Aorta (tissue), 5 donors: ENCODE measurements at regions of chr1 and their contacts with region 1.

Region 1: GRCh38 chr1:27102707-27103491 is 52.0 kb downstream of the SLC9A1 start:
- DNase-seq: peak; percentile 79 to 95
- ATAC-seq: peak; percentile 79
- H3K4me3 ChIP-seq: no peak overlapping the region
- H3K27ac ChIP-seq: no peak overlapping the region
- H3K4me1 ChIP-seq: no peaks in the 10 kb centered on the region
- H3K27me3 ChIP-seq: no peaks in the 10 kb centered on the region

Region 2: DNA sequence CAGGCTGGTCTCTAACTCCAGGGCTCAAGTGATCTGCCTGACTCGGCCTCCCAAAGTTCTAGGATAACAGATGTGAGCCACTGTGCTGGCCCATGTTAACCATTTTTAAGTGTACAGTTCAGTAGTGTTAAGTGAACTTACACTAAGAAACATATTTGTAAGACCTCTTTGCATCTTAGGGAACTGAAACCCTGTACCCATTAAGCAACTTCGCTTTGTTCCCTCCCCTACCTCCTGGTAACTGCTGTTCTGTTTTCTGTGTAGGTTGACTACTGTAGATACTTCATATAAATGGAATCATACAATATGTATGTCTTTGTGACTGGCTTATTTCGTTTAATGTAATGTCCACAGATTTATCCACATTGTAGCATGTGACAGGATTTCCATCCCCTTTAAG is 170.4 kb before region 1 on chr1:
- intact Hi-C with region 1: no loop called
- DNase-seq: no peak
- ATAC-seq: no peak
- H3K4me3 ChIP-seq: no peak overlapping the region
- H3K27ac ChIP-seq: no peak overlapping the region
- H3K4me1 ChIP-seq: no peaks in the 10 kb centered on the region
- H3K27me3 ChIP-seq: no peaks in the 10 kb centered on the region

Region 3: GRCh38 chr1:27203946-27204345 is 101.0 kb after region 1 on chr1:
- intact Hi-C with region 1: loop called (anchors 2 kb)
- DNase-seq: no peak
- ATAC-seq: no peak
- H3K4me3 ChIP-seq: no peak overlapping the region
- H3K27ac ChIP-seq: no peak overlapping the region
- H3K4me1 ChIP-seq: no peaks in the 10 kb centered on the region
- H3K27me3 ChIP-seq: no peaks in the 10 kb centered on the region

Region 4: GRCh38 chr1:27284425-27285273 is 181.8 kb after region 1 on chr1:
- intact Hi-C with region 1: loop called (anchors 1 kb)
- DNase-seq: peak; percentile 88 to 93
- ATAC-seq: peak; percentile 90
- H3K4me3 ChIP-seq: no peak overlapping the region
- H3K27ac ChIP-seq: no peak overlapping the region
- H3K4me1 ChIP-seq: no peaks in the 10 kb centered on the region
- H3K27me3 ChIP-seq: no peaks in the 10 kb centered on the region

Region 5: GRCh38 chr1:27300341-27301051 is 197.6 kb after region 1 on chr1:
- intact Hi-C with region 1: loop called in 1 of 2 experiments (anchors 5 kb)
- DNase-seq: peak; percentile 88 to 91
- ATAC-seq: peak; percentile 93
- H3K4me3 ChIP-seq: no peak overlapping the region
- H3K27ac ChIP-seq: no peak overlapping the region
- H3K4me1 ChIP-seq: no peaks in the 10 kb centered on the region
- H3K27me3 ChIP-seq: no peaks in the 10 kb centered on the region

Region 6: GRCh38 chr1:27392096-27392777 is 289.3 kb after region 1 on chr1 and contains the start of gene GPR3:
- intact Hi-C with region 1: loop called in 1 of 2 experiments (anchors 10 kb)
- DNase-seq: peak; percentile 92 to 97
- ATAC-seq: peak; percentile 93
- H3K4me3 ChIP-seq: no peak within 1 kb of the TSS
- H3K27ac ChIP-seq: no peak within 1 kb of the TSS
- H3K4me1 ChIP-seq: no peaks in the 10 kb centered on the region
- H3K27me3 ChIP-seq: no peaks in the 10 kb centered on the region
- total RNA-seq, gene GPR3: 0.68 to 0.93 TPM